ENCODE measurements at regions of chr19 and their contacts with region 1.

Region 1: GRCh38 chr19:1896508-1896907 is 8.7 kb upstream of the ADAT3 start:
- DNase-seq: no peak
- H3K4me3 ChIP-seq: no peak overlapping the region
- H3K4me3 Mint-ChIP-seq: peak overlapping the region; percentile 75 to 95 (median 87)
- H3K27ac ChIP-seq: no peak overlapping the region
- H3K27ac Mint-ChIP-seq: peak overlapping the region; percentile 26 to 98 (median 89)
- H3K4me1 ChIP-seq: peaks cover 37% of the 10 kb centered on the region
- H3K4me1 Mint-ChIP-seq: peaks cover 27 to 42% (median 41%) of the 10 kb centered on the region in 3 donors
- H3K27me3 ChIP-seq: no peaks in the 10 kb centered on the region
- H3K27me3 Mint-ChIP-seq: no peaks in the 10 kb centered on the region

Region 2: GRCh38 chr19:1863726-1864480 is 32.6 kb before region 1 on chr19:
- CTCF ChIA-PET with region 1: interaction called, 10 read pairs
- POLR2A ChIA-PET with region 1: interaction called, 13 read pairs
- DNase-seq: peak; percentile 89 to 94 (median 93)
- H3K4me3 ChIP-seq: peak overlapping the region; percentile 66
- H3K4me3 Mint-ChIP-seq: peak overlapping the region; percentile 66 to 92 (median 76)
- H3K27ac ChIP-seq: peak overlapping the region; percentile 79
- H3K27ac Mint-ChIP-seq: peak overlapping the region in 5 of 8 donors; percentile 40 to 85 (median 64)
- H3K4me1 ChIP-seq: peaks cover 29% of the 10 kb centered on the region
- H3K4me1 Mint-ChIP-seq: peaks cover 18 to 52% (median 26%) of the 10 kb centered on the region in 3 donors
- H3K27me3 ChIP-seq: no peaks in the 10 kb centered on the region
- H3K27me3 Mint-ChIP-seq: peaks cover 0 to 4% of the 10 kb centered on the region in 2 donors

Region 3: GRCh38 chr19:1875646-1876495 is 20.6 kb before region 1 on chr19:
- CTCF ChIA-PET with region 1: interaction called, 10 read pairs
- POLR2A ChIA-PET with region 1: interaction called, 20 read pairs
- DNase-seq: peak; percentile 82 to 89 (median 86)
- H3K4me3 ChIP-seq: peak overlapping the region; percentile 93
- H3K4me3 Mint-ChIP-seq: peak overlapping the region; percentile 93 to 97 (median 96)
- H3K27ac ChIP-seq: peak overlapping the region; percentile 86
- H3K27ac Mint-ChIP-seq: peak overlapping the region; percentile 92 to 99 (median 98)
- H3K4me1 ChIP-seq: peaks cover 38% of the 10 kb centered on the region
- H3K4me1 Mint-ChIP-seq: peaks cover 22 to 49% (median 25%) of the 10 kb centered on the region in 3 donors
- H3K27me3 ChIP-seq: no peaks in the 10 kb centered on the region
- H3K27me3 Mint-ChIP-seq: peaks cover 0 to 5% of the 10 kb centered on the region in 2 donors

Region 4: DNA sequence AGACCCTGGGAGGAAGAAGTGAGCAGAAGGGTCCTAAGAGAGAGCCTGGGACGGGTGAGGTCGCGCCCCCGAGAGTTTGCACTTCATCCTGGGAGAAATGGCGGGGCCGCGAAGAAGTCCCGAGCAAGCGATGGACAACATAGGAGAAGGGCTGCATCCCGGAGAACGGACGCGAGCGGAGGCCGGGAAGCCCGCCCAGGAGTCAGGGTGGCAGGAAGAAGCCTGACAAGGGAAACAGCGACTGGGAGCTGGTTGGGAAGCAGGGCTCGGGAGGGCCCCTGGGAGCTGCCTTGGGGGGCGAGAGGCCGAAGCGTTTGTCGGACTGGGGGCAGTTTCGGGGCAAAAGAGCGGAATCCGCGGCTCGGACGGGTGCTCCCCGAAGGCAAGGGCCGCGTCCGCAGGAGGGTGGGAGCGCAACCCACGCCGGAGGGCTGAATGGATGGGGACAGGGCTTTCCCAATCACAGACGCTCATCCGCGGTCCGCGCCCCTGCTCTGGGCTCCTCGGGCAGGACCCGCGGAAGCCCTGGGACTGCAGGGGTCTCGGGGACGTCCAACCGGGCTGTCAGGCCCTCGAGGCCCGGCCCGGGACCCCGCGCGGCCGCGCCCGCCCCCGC is 11.7 kb before region 1 on chr19:
- CTCF ChIA-PET with region 1: interaction called, 20 read pairs
- POLR2A ChIA-PET with region 1: interaction called, 14 read pairs
- DNase-seq: no peak
- H3K4me3 ChIP-seq: peak overlapping the region; percentile 70
- H3K4me3 Mint-ChIP-seq: peak overlapping the region; percentile 94 to 100 (median 99)
- H3K27ac ChIP-seq: peak overlapping the region; percentile 96
- H3K27ac Mint-ChIP-seq: peak overlapping the region; percentile 96 to 100 (median 100)
- H3K4me1 ChIP-seq: peaks cover 34% of the 10 kb centered on the region
- H3K4me1 Mint-ChIP-seq: peaks cover 26 to 44% (median 28%) of the 10 kb centered on the region in 3 donors
- H3K27me3 ChIP-seq: no peaks in the 10 kb centered on the region
- H3K27me3 Mint-ChIP-seq: peaks cover 0 to 10% of the 10 kb centered on the region in 2 donors

Region 5: DNA sequence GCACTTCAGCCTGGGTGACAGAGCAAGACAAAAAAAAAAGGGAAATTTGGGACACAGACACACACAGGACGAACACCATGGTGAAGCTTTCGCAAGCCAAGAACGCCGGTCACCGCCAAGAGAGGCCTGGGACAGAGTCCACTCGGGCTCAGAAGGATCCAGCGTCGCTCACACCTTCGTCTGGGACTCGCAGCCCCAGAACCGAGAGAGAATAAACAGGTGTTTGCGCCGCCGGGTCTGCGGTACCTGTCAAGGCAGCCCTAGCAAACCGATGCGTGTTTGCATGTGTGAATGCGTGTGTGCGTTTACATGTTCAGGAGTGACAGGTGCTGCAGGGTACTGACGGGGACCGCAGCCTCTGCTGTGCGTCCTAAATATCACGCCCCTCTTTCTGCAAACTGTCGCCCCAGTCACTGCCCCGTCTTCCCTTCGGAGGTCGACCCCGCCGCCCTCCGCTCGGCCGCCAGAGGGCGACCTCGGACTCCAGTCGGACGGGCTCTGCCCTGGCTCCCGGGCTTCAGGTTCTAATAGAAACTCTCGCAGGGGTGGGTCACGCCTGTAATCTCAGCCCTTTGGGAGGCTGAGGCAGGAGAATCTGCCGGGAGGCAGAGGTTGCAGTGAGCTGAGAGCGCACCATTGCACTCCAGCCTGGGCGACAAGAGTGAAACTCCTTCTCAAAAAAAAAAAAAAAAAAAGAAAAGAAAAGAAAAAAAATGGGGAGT is 32.7 kb after region 1 on chr19:
- CTCF ChIA-PET with region 1: interaction called, 18 read pairs
- POLR2A ChIA-PET with region 1: no interaction called
- DNase-seq: peak; percentile 74 to 85 (median 75)
- H3K4me3 ChIP-seq: peak overlapping the region; percentile 45
- H3K4me3 Mint-ChIP-seq: peak overlapping the region; percentile 66 to 93 (median 74)
- H3K27ac ChIP-seq: no peak overlapping the region
- H3K27ac Mint-ChIP-seq: peak overlapping the region in 4 of 8 donors; percentile 52 to 98 (median 87)
- H3K4me1 ChIP-seq: peaks cover 20% of the 10 kb centered on the region
- H3K4me1 Mint-ChIP-seq: peaks cover 15 to 28% (median 18%) of the 10 kb centered on the region in 3 donors
- H3K27me3 ChIP-seq: no peaks in the 10 kb centered on the region
- H3K27me3 Mint-ChIP-seq: peaks cover 0 to 4% of the 10 kb centered on the region in 2 donors

Region 6: DNA sequence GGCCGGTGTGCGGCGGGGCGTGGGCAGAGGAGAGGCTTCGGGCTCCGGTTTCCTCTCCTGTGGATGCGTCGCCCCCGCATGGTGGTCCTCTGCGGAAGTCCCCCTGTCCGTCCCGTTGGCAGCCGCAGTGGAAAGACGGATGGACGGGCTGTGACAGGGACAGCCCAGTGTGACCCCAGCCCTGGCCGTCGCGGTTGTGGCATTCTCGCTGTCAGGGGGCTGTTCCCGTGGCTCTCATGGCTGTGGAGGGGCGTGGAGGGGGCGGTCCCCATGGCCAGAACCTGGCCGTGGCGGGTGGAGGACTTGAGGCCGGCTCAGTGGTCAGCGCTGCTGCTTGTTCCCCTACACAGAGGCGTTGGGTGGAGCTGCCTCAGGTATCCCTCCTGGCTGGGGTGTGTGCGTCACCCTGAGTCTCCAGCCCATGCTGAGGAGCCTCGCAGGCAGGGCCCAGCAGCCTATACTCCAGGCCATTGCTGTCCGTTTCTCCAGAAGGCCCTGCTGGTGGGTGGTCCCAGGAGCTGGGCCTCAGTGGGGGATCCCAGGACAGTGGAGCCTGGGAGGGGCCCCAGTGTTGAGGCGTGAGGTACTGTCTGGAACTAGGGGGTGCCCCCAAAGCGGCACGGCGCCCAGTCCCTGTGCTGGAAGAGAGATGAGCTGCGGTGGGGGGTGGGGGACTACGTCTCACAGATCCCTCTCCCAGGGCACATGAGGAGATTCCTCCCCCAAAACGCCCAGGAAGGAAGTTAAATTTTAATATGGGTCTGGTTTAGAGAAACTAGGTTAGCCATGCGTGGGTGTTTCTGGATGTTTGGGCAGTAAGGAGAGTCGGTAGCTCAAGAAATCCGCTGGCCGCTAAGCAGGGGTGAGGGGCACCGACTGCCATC is 64.7 kb after region 1 on chr19:
- CTCF ChIA-PET with region 1: no interaction called
- POLR2A ChIA-PET with region 1: no interaction called
- DNase-seq: no peak
- H3K4me3 ChIP-seq: no peak overlapping the region
- H3K4me3 Mint-ChIP-seq: no peak overlapping the region
- H3K27ac ChIP-seq: no peak overlapping the region
- H3K27ac Mint-ChIP-seq: peak overlapping the region in 5 of 8 donors; percentile 29 to 85 (median 58)
- H3K4me1 ChIP-seq: peaks cover 8% of the 10 kb centered on the region
- H3K4me1 Mint-ChIP-seq: peaks cover 9 to 48% (median 14%) of the 10 kb centered on the region in 3 donors
- H3K27me3 ChIP-seq: no peaks in the 10 kb centered on the region
- H3K27me3 Mint-ChIP-seq: peaks cover 0 to 2% of the 10 kb centered on the region in 2 donors

Region 7: DNA sequence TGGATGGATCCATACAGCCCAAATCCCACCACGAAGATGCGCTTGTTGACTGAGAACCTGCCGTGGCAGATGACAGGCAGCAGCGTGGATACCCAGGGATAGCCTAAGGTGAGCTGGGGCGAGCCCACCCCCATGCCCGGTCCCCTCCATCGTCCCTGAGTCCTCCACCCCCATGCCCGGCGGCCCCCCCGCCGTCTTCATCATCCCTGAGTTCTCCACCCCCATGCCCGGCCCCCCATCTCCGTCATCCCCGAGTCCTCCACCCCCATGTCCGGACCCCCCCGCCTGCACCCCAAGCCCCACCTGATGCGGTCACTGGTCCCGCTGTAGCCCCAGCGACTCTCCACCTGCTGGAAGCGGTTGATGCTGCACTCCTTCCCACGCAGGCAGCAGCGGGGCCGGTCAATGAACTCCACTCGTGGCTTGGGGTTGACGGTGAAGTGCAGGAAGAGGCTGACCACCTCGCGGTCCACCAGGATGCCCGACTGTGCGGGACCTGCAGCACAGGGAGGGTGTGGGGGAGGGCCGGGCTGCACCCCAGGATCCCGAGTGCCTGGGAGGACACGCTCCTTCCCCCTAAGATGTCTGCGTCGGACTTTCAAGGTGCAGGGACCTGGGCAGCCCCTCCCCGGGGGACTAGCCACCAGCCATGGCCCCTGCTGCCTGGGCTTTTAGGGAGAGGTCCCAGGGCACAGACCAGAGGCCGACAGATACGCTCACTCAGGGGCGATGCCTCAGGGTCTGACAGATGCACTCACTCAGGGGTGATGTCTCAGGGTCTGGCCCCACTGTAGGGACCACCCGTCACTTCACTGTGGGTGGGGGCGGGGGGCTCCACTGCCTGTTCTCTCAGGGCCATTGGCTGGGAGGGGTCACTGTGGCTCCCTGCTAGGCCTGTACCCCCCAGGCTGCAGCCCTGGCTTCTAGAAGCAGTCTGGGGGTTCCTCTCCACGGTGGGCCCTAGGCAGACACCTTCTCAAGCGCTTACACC is 91.0 kb after region 1 on chr19:
- CTCF ChIA-PET with region 1: no interaction called
- POLR2A ChIA-PET with region 1: no interaction called
- DNase-seq: no peak
- H3K4me3 ChIP-seq: no peak overlapping the region
- H3K4me3 Mint-ChIP-seq: no peak overlapping the region
- H3K27ac ChIP-seq: no peak overlapping the region
- H3K27ac Mint-ChIP-seq: peak overlapping the region in 1 of 8 donors; percentile 77
- H3K4me1 ChIP-seq: no peaks in the 10 kb centered on the region
- H3K4me1 Mint-ChIP-seq: peaks cover 0 to 2% (median 0%) of the 10 kb centered on the region in 3 donors
- H3K27me3 ChIP-seq: no peaks in the 10 kb centered on the region
- H3K27me3 Mint-ChIP-seq: no peaks in the 10 kb centered on the region

Measured in CD8-positive, alpha-beta memory T cell (primary cell).